Right cardiac atrium (tissue), 5 donors: ENCODE measurements at regions of chr15 and their contacts with region 1.

Region 1: GRCh38 chr15:90086868-90087268 is 15.4 kb downstream of the IDH2 start:
- DNase-seq: no peak
- ATAC-seq: peak in 1 of 2 donors; percentile 41
- H3K4me3 ChIP-seq: no peak overlapping the region
- H3K27ac ChIP-seq: no peak overlapping the region
- H3K4me1 ChIP-seq: no peaks in the 10 kb centered on the region
- H3K27me3 ChIP-seq: no peaks in the 10 kb centered on the region

Region 2: GRCh38 chr15:89893696-89894455 is 193.0 kb before region 1 on chr15 and contains the start of gene AP3S2:
- intact Hi-C with region 1: loop called in 1 of 4 experiments (anchors 5 kb)
- DNase-seq: peak; percentile 91 to 95 (median 95)
- ATAC-seq: peak; percentile 98 to 99
- H3K4me3 ChIP-seq: peak within 1 kb of the TSS; percentile 84
- H3K27ac ChIP-seq: peak within 1 kb of the TSS; percentile 88
- H3K4me1 ChIP-seq: peaks cover 2% of the 10 kb centered on the region
- H3K27me3 ChIP-seq: no peaks in the 10 kb centered on the region
- total RNA-seq, gene AP3S2: 38.5 to 42.6 (median 40.4) TPM